ENCODE measurements at regions of chr20 and their contacts with region 1.

Region 1: GRCh38 chr20:45044084-45044573 is 56.8 kb downstream of the KCNS1 start:
- DNase-seq: peak; percentile 74
- H3K27ac ChIP-seq: peak overlapping the region; percentile 32; the same call in 1 of the 2 replicates
- CTCF ChIP-seq: peak; percentile 99

Region 2: GRCh38 chr20:44924570-44924969 is 119.6 kb before region 1 on chr20:
- CTCF ChIA-PET with region 1: no interaction called
- POLR2A ChIA-PET with region 1: no interaction called
- DNase-seq: no peak
- H3K27ac ChIP-seq: peak overlapping the region; percentile 37
- CTCF ChIP-seq: no peak

Region 3: DNA sequence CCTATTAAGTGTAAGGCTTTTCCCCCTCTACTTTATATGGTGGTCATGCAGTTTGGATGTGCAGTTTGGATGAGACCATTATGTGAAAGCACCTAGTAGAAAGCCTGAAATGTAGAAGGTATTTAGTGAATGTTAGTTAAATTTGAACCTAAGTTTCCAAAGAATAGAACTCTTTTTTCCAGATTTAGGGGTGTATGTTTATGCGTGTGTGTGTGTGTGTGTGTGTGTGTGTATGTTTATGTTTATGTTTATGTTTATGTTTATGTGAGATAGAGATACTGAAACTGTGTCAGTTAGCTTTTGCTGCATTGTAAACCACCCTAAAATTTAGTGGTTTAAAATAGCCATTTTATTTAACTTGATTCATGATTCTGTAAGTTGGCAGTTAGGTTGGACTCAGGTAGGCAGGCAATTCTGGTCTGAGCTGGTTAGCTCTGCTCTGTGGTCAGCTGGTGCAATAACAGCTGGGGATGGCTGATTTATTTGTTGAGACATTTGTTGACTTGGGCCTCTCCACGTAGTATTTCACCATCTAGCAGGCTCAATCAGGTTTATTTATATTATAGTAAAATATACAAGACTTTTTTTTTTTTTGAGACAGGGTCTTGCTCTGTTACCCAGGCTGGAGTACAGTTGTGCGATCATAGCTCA is 23.8 kb before region 1 on chr20:
- CTCF ChIA-PET with region 1: interaction called, 13 read pairs
- POLR2A ChIA-PET with region 1: no interaction called
- DNase-seq: no peak
- H3K27ac ChIP-seq: peak overlapping the region; percentile 19; the same call in 1 of the 2 replicates
- CTCF ChIP-seq: no peak

Region 4: GRCh38 chr20:45080867-45081624 is 36.9 kb after region 1 on chr20:
- CTCF ChIA-PET with region 1: interaction called, 17 read pairs
- POLR2A ChIA-PET with region 1: no interaction called
- DNase-seq: no peak
- H3K27ac ChIP-seq: no peak overlapping the region
- CTCF ChIP-seq: no peak

Region 5: GRCh38 chr20:45095753-45096371 is 51.7 kb after region 1 on chr20:
- CTCF ChIA-PET with region 1: interaction called, 171 read pairs
- POLR2A ChIA-PET with region 1: no interaction called
- DNase-seq: peak; percentile 83
- H3K27ac ChIP-seq: no peak overlapping the region
- CTCF ChIP-seq: peak; percentile 98

Region 6: GRCh38 chr20:45111799-45112471 is 67.8 kb after region 1 on chr20:
- CTCF ChIA-PET with region 1: interaction called, 32 read pairs
- POLR2A ChIA-PET with region 1: no interaction called
- DNase-seq: no peak
- H3K27ac ChIP-seq: no peak overlapping the region
- CTCF ChIP-seq: peak; percentile 66

Region 7: GRCh38 chr20:45157962-45158361 is 113.8 kb after region 1 on chr20:
- CTCF ChIA-PET with region 1: no interaction called
- POLR2A ChIA-PET with region 1: no interaction called
- DNase-seq: peak; percentile 89
- H3K27ac ChIP-seq: no peak overlapping the region
- CTCF ChIP-seq: no peak

Region 8: GRCh38 chr20:45306431-45306982 is 262.4 kb after region 1 on chr20 and contains the start of gene RBPJL:
- CTCF ChIA-PET with region 1: interaction called, 19 read pairs
- POLR2A ChIA-PET with region 1: no interaction called
- DNase-seq: peak; percentile 49
- H3K27ac ChIP-seq: no peak within 1 kb of the TSS
- CTCF ChIP-seq: peak; percentile 98

Measured in RWPE1 (cell line).